Activated CD4-positive, alpha-beta T cell treated with anti-CD3 and anti-CD28 coated beads, Interleukin-2, amount 10 ng/mL, durations not matched to agents 24 days and 14 days (primary cell): ENCODE measurements at regions of chr9 and their contacts with region 1.

Region 1: DNA sequence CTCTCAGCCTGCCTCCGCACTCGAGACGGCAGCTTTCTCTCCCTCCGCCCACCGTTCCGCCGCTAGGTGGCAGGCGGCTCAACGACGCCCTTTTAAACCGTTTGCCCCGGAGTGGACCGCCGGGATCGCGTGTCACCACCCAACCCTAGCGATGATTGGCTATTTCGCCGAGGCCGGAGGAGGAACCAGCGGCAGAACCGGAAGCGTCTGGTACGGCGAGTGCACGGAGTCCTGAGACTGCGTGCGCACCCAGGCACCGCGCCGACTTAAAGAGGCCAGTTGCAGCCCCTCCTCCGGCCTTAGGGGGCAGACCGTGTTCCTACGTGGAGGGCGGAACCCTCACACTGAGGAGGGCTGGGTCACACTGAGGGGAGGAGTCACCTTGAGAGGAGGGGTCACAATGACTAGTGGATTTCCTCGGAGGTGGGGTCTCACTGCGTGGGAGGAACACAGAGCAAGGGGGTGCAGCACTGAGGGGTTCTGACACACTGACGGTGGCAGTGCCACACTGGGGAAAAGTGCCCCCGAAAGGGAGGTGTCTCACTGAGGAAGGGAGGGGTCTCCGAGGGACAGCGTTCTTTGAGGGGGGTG is 980 bp upstream of the TESK1 start:
- DNase-seq: peak; percentile 100
- H3K4me3 Mint-ChIP-seq: peak overlapping the region; percentile 90
- H3K27ac Mint-ChIP-seq: peak overlapping the region; percentile 96
- H3K4me1 Mint-ChIP-seq: peaks cover 22% of the 10 kb centered on the region
- H3K27me3 Mint-ChIP-seq: no peaks in the 10 kb centered on the region

Region 2: DNA sequence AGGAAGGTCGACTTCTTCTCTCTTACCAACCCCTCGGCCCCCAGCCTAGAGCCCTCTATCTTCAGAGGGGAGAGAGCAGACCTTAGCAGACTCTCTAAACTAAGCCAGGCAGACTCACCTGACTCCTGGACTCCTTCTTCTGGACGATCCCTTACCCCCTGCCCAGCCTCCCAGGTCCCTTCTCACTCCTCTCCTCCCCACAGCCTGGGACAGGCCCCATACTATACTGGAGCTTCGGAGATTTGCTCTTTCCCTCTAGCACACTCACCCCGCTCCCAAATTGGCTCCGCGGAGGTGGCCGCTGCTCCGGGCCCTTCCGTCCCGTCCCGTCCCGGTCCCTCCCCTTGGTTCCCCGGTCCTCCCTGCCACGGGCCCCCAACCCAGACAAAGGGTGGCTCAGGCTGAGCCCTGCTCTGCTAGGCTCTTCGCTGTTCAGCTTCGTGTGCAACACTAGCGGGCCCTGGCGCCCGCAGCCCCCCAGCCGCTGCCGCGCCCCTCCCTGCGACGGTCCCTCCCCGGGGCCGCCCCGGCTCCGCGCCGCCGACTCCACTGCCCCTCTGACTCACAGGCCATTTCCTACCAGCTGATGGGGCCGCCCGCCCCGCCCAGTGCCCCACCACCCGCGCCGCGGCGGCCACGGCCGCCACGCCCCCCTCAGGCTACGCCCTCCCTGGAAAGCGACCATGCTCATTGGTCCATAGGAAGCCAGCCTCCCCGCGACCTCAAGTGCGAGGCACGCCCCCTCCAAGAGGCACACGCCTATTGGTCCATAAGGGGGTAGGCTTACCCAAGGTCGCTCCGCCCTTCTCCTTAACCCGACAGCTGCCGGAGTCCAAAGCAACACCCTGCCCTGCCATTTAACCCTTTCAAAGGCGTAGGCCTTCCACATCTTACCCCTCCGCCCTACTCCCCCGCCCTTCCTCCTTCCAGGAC is 492.8 kb before region 1 on chr9:
- intact Hi-C with region 1: loop called (anchors 1 kb)
- DNase-seq: peak; percentile 98
- H3K4me3 Mint-ChIP-seq: peak overlapping the region; percentile 71
- H3K27ac Mint-ChIP-seq: peak overlapping the region; percentile 85
- H3K4me1 Mint-ChIP-seq: peaks cover 49% of the 10 kb centered on the region
- H3K27me3 Mint-ChIP-seq: no peaks in the 10 kb centered on the region

Region 3: DNA sequence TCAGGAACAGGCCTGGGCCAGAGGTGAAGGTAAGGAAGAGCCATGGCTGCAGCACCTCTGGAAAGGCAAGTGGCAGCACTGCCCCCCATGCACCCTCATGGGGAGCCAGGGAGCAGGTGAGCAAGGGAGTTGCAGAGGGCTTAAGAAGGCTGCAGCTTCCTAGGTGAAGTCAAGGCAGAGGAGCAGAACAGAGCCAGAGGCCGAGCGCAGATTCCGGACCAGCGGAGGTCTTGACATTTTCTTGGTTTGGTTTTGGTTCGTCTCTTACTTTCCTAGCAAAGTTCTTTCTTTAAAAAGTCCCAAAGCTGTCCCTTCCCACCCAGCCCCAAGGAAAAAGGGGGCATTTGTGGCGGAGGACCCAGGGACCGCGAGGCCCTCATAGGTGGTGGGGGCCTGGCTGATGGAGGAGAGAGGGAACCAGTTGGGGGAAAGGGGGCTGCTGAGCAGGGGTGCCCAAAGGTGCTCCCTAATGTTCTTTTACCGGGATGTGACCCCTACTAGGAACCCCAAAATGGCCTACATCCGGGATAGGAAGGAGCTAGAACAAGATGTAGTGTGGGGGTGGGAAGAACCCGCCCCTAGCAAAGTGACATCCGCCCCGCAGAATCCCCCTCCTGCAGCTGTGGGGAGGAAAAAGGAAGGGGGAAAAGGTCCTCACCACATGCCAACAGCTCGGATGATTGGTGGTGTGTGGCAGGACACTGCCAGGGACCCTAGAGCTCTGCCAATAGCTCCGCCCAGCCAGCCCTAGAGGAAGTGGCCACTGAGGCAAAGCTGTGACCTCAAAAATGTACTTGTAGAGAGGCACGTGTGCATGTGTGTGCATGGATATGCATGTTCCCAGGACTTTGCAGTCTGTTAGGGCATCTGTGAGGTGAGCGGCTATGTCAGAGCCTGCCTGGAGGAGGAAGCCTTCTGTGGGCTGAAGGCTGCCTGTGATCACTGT is 15.0 kb after region 1 on chr9:
- intact Hi-C with region 1: loop called (anchors 1 kb)
- DNase-seq: peak; percentile 82
- H3K4me3 Mint-ChIP-seq: peak overlapping the region; percentile 81
- H3K27ac Mint-ChIP-seq: peak overlapping the region; percentile 95
- H3K4me1 Mint-ChIP-seq: peaks cover 59% of the 10 kb centered on the region
- H3K27me3 Mint-ChIP-seq: peaks cover 1% of the 10 kb centered on the region

Region 4: DNA sequence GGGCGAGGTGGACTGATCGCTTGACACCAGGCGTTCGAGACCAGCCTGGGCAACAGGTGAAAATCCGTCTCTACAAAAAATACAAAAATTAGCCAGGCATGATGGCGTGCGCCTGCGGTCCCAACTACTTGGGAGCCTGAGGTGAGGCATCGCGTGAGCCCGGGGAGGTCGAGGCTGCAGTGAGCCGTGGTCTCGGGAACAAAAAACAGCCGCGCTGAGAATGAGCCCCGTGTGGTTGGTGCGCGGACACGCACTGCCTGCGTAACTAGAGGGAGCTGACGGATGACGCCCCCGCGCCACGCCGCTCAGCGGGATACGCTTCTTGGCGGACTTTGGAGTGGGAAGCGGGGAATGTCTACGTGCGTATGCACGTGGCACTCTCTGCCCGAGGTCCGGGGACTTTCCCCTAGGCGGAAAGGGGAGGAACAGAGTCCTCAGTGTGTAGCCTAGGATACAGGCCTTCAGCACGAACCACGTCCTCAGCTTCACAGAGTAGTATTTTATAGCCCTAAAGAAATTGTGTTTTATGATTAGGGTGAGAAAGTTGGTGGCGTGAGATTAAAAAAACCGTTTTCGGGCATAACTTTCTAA is 53.6 kb after region 1 on chr9 and contains the start of gene RMRP:
- intact Hi-C with region 1: loop called (anchors 2 kb)
- DNase-seq: peak; percentile 96
- H3K4me3 Mint-ChIP-seq: peak within 1 kb of the TSS; percentile 92
- H3K27ac Mint-ChIP-seq: peak within 1 kb of the TSS; percentile 99
- H3K4me1 Mint-ChIP-seq: peaks cover 58% of the 10 kb centered on the region
- H3K27me3 Mint-ChIP-seq: peaks cover 7% of the 10 kb centered on the region
- total RNA-seq, gene RMRP: 5,949 and 6,301 TPM in 2 replicates

Region 5: DNA sequence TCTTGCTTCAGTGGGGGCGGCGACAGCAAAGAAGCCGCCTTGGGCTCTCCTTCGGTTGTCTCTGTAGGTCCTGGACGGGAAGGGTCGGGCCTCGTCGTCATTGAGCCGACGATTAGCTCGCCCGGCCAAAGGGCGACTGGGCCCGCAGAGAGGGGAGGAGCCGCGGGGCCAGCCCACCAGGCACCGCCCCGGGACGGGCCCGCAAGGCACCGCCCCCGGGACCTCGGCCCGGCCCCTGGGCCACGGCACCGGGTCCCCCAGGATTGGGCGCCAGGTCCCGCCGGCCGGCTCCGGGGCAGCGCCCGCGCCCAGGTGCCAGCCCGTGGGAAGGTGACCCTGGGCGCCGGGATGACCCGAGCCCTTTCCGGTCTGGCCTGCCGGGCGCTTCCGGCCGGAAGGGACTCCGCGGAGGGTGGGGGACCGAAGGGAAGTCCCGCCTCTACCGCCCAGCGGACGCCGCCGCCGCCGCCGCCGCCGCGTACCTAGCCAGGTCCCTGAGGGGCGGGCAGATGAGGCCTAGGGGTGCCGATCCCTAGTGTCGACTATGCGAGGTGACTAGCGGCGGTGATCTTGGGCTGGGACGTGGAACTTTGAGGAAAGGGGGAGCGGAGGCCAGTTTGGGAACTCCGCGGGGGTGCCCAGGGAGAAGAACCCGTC is 144.9 kb after region 1 on chr9 and contains the starts of genes GBA2 and RGP1:
- intact Hi-C with region 1: loop called (anchors 5 kb)
- DNase-seq: peak; percentile 93
- H3K4me3 Mint-ChIP-seq: peak within 1 kb of the TSS; percentile 94
- H3K27ac Mint-ChIP-seq: peak within 1 kb of the TSS; percentile 87
- H3K4me1 Mint-ChIP-seq: peaks cover 47% of the 10 kb centered on the region
- H3K27me3 Mint-ChIP-seq: no peaks in the 10 kb centered on the region
- total RNA-seq, gene GBA2: 46.7 and 50.1 TPM in 2 replicates
- total RNA-seq, gene RGP1: 16.3 and 16.7 TPM in 2 replicates